ENCODE measurements at regions of chr21 and their contacts with region 1.

Region 1: DNA sequence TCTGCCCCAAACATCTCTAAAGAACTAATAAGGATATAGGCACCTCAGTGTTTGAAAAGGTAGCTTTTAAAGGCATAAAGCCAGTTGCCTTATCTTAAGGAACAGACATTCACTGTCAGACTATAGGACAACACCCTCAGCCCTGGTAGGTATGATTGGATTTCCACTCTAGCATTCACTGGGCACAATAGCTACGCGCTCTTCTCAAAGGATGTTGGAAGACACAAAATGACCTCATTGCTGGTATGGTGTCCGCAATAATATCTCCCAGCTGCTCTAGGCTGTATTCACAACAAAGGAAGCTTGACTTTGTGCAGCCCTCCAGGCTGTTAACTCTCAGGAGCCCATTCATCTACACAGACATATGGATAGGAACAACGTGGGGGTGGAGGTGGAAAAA is 119.4 kb upstream of the CXADR start:
- DNase-seq: no peak
- H3K4me3 ChIP-seq: no peak overlapping the region
- CTCF ChIP-seq: no peak

Region 2: GRCh38 chr21:17414766-17415165 is 21.4 kb after region 1 on chr21:
- CTCF ChIA-PET with region 1: no interaction called
- POLR2A ChIA-PET with region 1: no interaction called
- DNase-seq: no peak
- H3K4me3 ChIP-seq: no peak overlapping the region
- CTCF ChIP-seq: no peak

Region 3: GRCh38 chr21:17585875-17586450 is 192.6 kb after region 1 on chr21:
- CTCF ChIA-PET with region 1: interaction called, 126 read pairs
- POLR2A ChIA-PET with region 1: no interaction called
- DNase-seq: no peak
- H3K4me3 ChIP-seq: no peak overlapping the region
- CTCF ChIP-seq: peak; percentile 51

Region 4: DNA sequence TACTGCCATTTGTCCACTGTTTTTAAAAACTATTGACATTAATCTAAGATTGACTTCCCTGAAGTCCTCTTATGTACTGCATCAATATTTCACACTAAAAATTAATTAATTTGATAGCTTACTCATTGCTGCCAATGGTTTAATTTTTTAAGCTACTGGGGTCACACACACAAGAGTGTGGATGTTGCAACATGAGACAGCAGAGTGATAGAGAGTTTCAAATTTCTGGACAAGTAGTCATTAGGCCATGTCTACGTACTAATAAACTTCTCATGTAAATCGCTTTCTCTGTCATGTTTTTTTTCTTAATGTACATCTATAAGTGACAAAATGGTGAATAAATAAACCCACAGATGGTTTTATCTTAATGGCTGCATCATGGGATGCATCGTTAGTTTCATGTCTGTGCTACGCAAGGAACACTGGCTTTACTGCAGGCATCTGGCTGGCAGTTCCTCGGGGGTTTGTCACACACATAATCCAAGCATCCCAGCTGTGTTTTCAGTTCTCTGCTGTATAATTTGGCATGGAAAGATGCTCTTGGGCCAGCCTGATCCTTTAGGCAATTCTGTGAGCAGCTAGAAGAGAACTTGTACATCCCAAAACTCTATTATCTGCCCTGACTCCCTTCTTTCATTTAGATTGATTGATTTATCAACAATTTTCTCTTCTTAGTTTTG is 834.8 kb after region 1 on chr21:
- CTCF ChIA-PET with region 1: no interaction called
- POLR2A ChIA-PET with region 1: no interaction called
- DNase-seq: no peak
- H3K4me3 ChIP-seq: no peak overlapping the region
- CTCF ChIP-seq: no peak

Measured in AG04449 (cell line).